A549 (cell line): ENCODE measurements at regions of chr20 and their contacts with region 1.

Region 1: DNA sequence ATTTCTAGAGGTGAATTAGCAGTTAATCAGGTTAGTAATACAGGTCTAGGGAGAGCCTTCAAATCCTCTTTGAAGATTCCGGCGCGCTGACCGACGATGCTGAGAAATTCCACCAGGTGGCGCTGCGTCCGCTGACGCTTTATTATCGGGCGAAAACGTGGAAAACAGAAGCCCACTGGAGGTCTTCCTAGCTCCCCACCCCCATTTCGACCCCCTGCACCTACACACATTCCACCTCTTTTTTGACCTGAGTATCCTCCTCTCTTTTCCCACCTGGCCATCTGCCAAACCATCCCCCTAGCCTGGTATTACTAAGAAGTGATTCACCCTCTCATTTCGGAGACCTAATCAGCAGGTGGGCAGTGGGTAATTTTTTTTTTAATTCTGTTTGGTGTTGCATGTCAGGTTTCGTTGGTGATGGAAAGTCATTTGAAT is 65.4 kb upstream of the RIN2 start:
- DNase-seq: peak; percentile 61 to 71
- ATAC-seq: peak in 1 of 2 experiments; percentile 67; a peak in 3 of 6 replicates
- H3K4me3 ChIP-seq: peak overlapping the region; percentile 10; the same call in 1 of the 3 replicates
- H3K27ac ChIP-seq: peak overlapping the region; percentile 37 to 79
- H3K4me1 ChIP-seq: peaks cover 25% of the 10 kb centered on the region
- CTCF ChIP-seq: peak; percentile 98
- EP300 ChIP-seq: no peak
- POLR2A ChIP-seq: no peak
- RAD21 ChIP-seq: peak; percentile 92

Region 2: DNA sequence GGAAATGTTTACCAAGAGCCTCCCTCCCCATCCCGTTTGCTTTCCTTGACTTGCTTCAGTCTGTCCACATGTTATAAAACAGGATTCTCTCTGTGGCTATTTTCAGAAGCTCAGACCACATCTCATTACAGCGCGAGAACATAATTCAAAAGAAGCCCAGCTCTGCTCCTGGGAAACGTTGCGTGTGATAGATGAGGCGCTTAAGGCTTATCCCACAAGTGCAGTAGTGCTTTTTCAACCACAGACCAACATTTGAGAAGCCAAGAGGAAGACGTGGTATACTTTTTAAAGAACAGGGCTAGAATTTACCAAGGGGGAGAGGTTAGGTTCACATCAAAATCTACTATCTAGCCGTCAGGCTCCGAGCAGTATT is 240.8 kb before region 1 on chr20:
- CTCF ChIA-PET with region 1: no interaction called
- POLR2A ChIA-PET with region 1: no interaction called
- DNase-seq: no peak
- ATAC-seq: no peak
- H3K4me3 ChIP-seq: no peak overlapping the region
- H3K27ac ChIP-seq: no peak overlapping the region
- H3K4me1 ChIP-seq: no peaks in the 10 kb centered on the region
- CTCF ChIP-seq: no peak
- EP300 ChIP-seq: no peak
- POLR2A ChIP-seq: no peak
- RAD21 ChIP-seq: no peak

Region 3: DNA sequence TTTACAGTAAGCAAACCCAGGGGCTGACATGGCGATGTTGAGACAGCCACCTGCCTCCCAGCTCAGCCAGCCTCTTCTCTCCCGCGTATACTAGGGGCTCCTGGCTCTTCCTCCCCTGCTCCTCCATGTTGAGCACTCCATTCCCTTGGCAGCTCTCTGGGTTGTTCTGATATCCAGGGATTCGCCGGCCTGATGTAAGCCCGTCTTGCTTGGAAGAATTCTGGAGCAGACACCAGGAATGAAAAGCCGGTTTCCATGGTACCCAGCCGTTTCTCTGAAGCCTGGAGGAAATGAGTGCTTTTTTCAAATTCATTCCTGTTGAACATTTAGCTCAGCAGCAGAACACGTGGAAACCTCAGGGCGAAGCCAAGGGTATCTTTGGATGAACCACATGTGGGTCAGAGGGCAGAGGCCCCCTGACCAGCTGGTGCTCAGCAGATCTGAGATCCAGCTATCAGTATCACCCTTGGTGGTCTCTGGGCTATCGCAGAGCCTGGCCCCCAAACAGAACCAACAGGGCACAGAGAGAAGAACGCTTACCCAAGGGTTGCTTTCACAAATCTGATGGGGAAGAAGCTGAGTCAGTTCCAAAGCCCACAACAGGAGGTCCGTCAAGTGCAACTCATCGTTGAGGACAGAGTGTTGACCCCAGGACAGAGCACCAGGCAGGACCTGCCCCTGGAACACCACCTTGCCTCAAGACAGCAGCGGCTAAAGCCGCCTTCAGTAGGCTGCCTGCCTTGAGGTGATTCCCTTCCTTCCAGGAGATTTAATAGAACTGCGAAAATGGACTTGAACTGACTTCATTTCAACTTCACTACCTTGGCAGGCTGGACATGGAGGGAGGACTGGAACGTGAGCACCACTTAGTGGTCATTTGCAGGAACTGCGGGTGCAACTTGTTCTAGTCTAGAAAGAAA is 30.7 kb before region 1 on chr20:
- CTCF ChIA-PET with region 1: interaction called, 24 read pairs
- POLR2A ChIA-PET with region 1: no interaction called
- DNase-seq: peak; percentile 55 to 79
- ATAC-seq: peak; percentile 75 to 90
- H3K4me3 ChIP-seq: no peak overlapping the region
- H3K27ac ChIP-seq: no peak overlapping the region
- H3K4me1 ChIP-seq: no peaks in the 10 kb centered on the region
- CTCF ChIP-seq: peak; percentile 97
- EP300 ChIP-seq: no peak
- POLR2A ChIP-seq: no peak
- RAD21 ChIP-seq: peak; percentile 96 to 99

Region 4: GRCh38 chr20:19682249-19682648 is 10.5 kb before region 1 on chr20:
- CTCF ChIA-PET with region 1: interaction called, 11 read pairs
- POLR2A ChIA-PET with region 1: no interaction called
- DNase-seq: no peak
- ATAC-seq: no peak
- H3K4me3 ChIP-seq: no peak overlapping the region
- H3K27ac ChIP-seq: no peak overlapping the region
- H3K4me1 ChIP-seq: no peaks in the 10 kb centered on the region
- CTCF ChIP-seq: no peak
- EP300 ChIP-seq: no peak
- POLR2A ChIP-seq: no peak
- RAD21 ChIP-seq: no peak

Region 5: GRCh38 chr20:19713822-19714578 is 21.3 kb after region 1 on chr20:
- CTCF ChIA-PET with region 1: interaction called, 22 read pairs
- POLR2A ChIA-PET with region 1: no interaction called
- DNase-seq: no peak
- ATAC-seq: no peak
- H3K4me3 ChIP-seq: no peak overlapping the region
- H3K27ac ChIP-seq: no peak overlapping the region
- H3K4me1 ChIP-seq: peaks cover 18% of the 10 kb centered on the region
- CTCF ChIP-seq: no peak
- EP300 ChIP-seq: no peak
- POLR2A ChIP-seq: no peak
- RAD21 ChIP-seq: no peak

Region 6: DNA sequence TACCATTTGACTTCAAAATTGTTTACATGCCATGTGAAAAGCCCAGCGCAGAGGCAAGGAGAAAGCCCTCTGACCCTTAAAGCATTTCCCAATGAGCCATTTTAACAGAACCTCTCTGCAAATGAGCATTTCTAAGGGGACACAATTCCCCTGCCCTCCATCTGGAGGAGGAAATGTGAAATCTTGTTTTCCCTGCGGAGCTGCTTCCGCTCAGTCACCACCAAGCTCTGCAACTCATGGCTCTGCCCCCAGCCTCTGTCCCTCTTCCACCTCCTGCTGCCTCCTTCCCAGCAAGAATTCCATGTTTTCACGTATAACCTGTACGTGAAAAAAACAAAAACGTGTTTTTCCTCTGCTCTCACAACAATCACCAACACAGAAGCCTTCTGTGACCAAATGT is 77.7 kb after region 1 on chr20:
- CTCF ChIA-PET with region 1: interaction called, 13 read pairs
- POLR2A ChIA-PET with region 1: no interaction called
- DNase-seq: no peak
- ATAC-seq: no peak
- H3K4me3 ChIP-seq: no peak overlapping the region
- H3K27ac ChIP-seq: no peak overlapping the region
- H3K4me1 ChIP-seq: peaks cover 12% of the 10 kb centered on the region
- CTCF ChIP-seq: no peak
- EP300 ChIP-seq: no peak
- POLR2A ChIP-seq: no peak
- RAD21 ChIP-seq: no peak

Region 7: GRCh38 chr20:19974626-19975435 is 282.1 kb after region 1 on chr20:
- CTCF ChIA-PET with region 1: interaction called, 10 read pairs
- POLR2A ChIA-PET with region 1: no interaction called
- DNase-seq: peak; percentile 77 to 89
- ATAC-seq: peak; percentile 83 to 87
- H3K4me3 ChIP-seq: peak overlapping the region; percentile 65
- H3K27ac ChIP-seq: peak overlapping the region; percentile 94 to 95
- H3K4me1 ChIP-seq: peaks cover 40% of the 10 kb centered on the region
- CTCF ChIP-seq: no peak
- EP300 ChIP-seq: no peak
- POLR2A ChIP-seq: peak; percentile 72
- RAD21 ChIP-seq: peak in 1 of 2 experiments; percentile 31; a peak in 3 of 5 replicates

Region 8: GRCh38 chr20:20017001-20017843 is 324.5 kb after region 1 on chr20 and contains the start of gene NAA20:
- CTCF ChIA-PET with region 1: interaction called, 18 read pairs
- POLR2A ChIA-PET with region 1: no interaction called
- DNase-seq: peak; percentile 98
- ATAC-seq: peak; percentile 99
- H3K4me3 ChIP-seq: peak within 1 kb of the TSS; percentile 95
- H3K27ac ChIP-seq: peak within 1 kb of the TSS; percentile 93 to 94
- H3K4me1 ChIP-seq: peaks cover 22% of the 10 kb centered on the region
- CTCF ChIP-seq: peak; percentile 59
- EP300 ChIP-seq: no peak
- POLR2A ChIP-seq: peak; percentile 62
- RAD21 ChIP-seq: peak; percentile 59 to 66
- polyA plus RNA-seq, gene NAA20: 154 and 219 TPM in 2 replicates